HepG2 (cell line): ENCODE measurements at regions of chr13 and their contacts with region 1.

Region 1: DNA sequence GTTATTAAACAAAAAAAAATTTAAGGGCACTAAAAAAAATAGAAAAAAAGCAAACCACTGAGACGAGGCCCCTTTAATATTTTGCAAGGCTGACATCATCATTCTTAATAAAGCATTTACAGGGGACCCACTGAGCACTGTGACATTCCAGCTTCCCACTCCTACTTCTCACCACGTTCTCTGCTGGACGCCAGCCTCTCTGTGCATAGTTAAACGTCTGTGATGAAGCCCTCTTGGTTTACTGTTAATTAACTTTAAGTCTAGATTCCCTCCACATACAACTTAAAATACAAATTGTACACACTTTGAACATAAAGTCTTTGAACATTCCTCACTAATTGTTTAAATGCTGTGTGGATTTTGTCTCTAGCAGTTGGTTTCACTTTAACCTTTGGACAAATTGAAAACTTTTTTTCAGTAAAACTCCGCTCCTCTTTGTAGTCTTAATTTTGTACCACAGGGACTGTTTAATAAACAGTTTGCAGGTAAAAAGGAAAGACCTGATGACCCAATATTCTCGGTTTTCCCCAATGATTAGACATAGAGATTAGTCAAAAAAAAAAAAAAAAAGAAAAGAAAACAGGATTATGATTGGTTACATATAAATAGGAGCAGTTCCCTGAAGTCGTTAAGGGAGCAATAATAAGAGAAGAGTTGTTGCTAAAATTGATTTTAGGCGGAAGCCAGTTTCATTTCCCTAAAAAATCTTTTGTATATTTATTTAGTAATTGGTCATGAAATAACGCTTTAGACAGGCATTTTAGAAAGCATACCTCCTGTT is 219.8 kb downstream of the MZT1 start:
- DNase-seq: no peak
- ATAC-seq: peak; percentile 77
- H3K4me3 ChIP-seq: peak overlapping the region in 2 of 3 experiments; percentile 36 to 49; a peak in 4 of 6 replicates
- H3K27ac ChIP-seq: no peak overlapping the region
- H3K4me1 ChIP-seq: peaks cover 36% of the 10 kb centered on the region
- H3K27me3 ChIP-seq: no peaks in the 10 kb centered on the region
- CTCF ChIP-seq: no peak
- EP300 ChIP-seq: no peak
- POLR2A ChIP-seq: no peak
- RAD21 ChIP-seq: no peak

Region 2: DNA sequence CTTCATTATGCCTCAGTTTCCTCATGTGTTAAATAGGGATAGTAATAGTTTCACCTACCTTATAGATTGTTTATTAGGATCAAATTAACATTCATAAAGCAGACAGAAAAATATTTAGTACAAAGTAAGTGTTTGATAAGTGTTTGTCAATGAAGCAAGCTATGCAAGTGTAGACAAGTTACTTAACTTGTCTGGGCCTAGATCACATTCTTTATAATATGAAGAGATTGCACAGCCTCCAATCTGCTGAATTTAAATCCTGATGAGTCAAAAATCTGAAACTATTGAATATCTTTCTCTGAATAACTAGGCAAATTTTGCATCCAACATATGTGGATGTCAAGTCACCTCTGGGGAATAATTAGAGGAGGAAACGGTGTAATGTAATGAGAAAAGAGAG is 49.3 kb after region 1 on chr13:
- CTCF ChIA-PET with region 1: no interaction called
- POLR2A ChIA-PET with region 1: no interaction called
- in situ Hi-C with region 1: no loop called
- intact Hi-C with region 1: loop called (anchors 5 kb)
- DNase-seq: no peak
- ATAC-seq: no peak
- H3K4me3 ChIP-seq: no peak overlapping the region
- H3K27ac ChIP-seq: no peak overlapping the region
- H3K4me1 ChIP-seq: peaks cover 27% of the 10 kb centered on the region
- H3K27me3 ChIP-seq: no peaks in the 10 kb centered on the region
- CTCF ChIP-seq: no peak
- EP300 ChIP-seq: no peak
- POLR2A ChIP-seq: no peak
- RAD21 ChIP-seq: no peak